Pancreas (tissue), 10 donors: ENCODE measurements at regions of chr3 and their contacts with region 1.

Region 1: GRCh38 chr3:179100652-179101051 is 29.0 kb upstream of the ZMAT3 start:
- DNase-seq: no peak
- ATAC-seq: no peak
- H3K4me3 ChIP-seq: no peak overlapping the region
- H3K27ac ChIP-seq: no peak overlapping the region
- H3K4me1 ChIP-seq: no peaks in the 10 kb centered on the region
- H3K27me3 ChIP-seq: no peaks in the 10 kb centered on the region
- CTCF ChIP-seq: no peak

Region 2: GRCh38 chr3:178986456-178986855 is 114.2 kb before region 1 on chr3:
- intact Hi-C with region 1: no loop called
- DNase-seq: no peak
- ATAC-seq: no peak
- H3K4me3 ChIP-seq: no peak overlapping the region
- H3K27ac ChIP-seq: no peak overlapping the region
- H3K4me1 ChIP-seq: no peaks in the 10 kb centered on the region
- H3K27me3 ChIP-seq: no peaks in the 10 kb centered on the region
- CTCF ChIP-seq: no peak

Region 3: GRCh38 chr3:179309225-179310078 is 208.8 kb after region 1 on chr3:
- intact Hi-C with region 1: loop called in 1 of 3 experiments (anchors 10 kb)
- DNase-seq: no peak
- ATAC-seq: no peak
- H3K4me3 ChIP-seq: no peak overlapping the region
- H3K27ac ChIP-seq: no peak overlapping the region
- H3K4me1 ChIP-seq: no peaks in the 10 kb centered on the region
- H3K27me3 ChIP-seq: peaks cover 0 to 3% (median 0%) of the 10 kb centered on the region in 4 donors
- CTCF ChIP-seq: no peak